Activated CD4-positive, alpha-beta T cell treated with anti-CD3 and anti-CD28 coated beads for 36 hours (primary cell): ENCODE measurements at regions of chr16 and their contacts with region 1.

Region 1: DNA sequence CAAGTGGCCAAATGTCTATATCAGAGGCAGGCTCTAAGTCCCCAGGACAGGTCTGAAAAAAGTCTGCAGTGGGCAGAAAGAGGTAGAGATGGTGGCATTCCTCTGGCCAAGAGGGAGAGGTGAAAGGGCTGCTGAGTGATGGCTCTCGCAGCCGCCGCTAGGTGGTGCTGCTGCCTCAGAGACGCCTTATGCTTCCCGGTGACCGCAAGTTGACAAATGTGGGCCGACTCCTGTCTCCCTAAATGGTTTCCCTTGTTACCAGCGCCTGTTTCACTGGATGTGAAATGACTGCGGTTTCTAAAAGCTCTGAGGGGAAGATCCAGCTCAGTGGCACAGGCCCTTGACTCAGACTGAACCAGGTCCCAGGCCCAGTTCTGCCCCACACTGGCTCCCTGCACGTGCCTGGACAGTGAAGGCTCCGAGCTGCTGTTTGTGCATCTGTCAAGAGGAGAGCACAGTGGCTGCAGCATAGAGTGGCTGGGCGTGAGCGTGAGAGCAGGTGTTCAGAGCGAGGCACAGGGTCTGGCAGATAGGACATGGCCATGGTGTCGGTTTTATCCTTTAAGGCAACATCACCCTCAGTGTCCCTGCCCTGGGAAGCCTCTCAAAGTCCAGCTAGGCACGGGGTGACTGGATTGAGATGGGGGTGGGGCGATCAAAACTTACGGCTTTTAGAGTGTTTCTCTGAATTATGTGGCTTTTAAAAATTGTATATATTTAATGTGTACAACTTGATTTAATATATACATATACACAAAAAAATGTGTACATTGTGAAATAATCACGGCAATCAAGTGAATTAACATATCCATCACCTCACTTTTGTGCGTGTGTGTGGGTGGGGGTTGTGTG is 19.9 kb downstream of the CLEC16A start:
- DNase-seq: peak; percentile 93
- ATAC-seq: peak; percentile 40
- H3K4me3 Mint-ChIP-seq: peak overlapping the region; percentile 59
- H3K27ac Mint-ChIP-seq: peak overlapping the region; percentile 98
- H3K4me1 Mint-ChIP-seq: peaks cover 74% of the 10 kb centered on the region
- H3K27me3 Mint-ChIP-seq: no peaks in the 10 kb centered on the region

Region 2: DNA sequence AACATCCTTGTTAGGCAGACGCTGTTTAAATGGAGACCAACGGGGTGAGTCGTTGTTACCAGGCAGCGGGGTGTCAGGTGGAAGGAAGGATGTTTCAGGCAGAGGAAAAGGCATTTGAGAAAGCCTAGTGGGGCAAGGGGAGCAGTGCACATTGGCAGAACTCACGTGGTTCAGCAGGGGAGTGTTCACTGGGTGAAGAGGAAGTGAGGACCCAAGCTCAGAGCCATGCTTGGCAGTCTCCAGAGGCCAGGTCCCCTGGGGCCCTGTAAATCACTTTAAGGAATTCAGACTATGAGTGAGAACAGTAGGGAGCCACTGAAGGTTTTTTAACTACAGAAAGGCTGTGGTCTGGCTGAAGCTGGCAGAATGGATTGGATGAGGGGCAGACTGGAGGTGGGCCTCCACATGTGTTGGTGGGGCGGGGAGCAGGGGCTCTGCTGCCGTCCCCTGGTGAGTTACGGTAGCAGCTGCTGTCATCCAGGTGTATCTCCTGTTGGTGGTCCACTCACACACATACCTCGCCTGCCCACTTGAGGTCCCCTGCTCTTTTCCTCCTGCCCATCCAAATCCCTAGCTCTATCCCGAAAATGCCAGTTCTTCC is 14.8 kb before region 1 on chr16:
- CTCF ChIA-PET with region 1: interaction called, 121 read pairs
- POLR2A ChIA-PET with region 1: interaction called, 3 read pairs
- intact Hi-C with region 1: no loop called
- DNase-seq: peak; percentile 69
- ATAC-seq: peak; percentile 81
- H3K4me3 Mint-ChIP-seq: no peak overlapping the region
- H3K27ac Mint-ChIP-seq: peak overlapping the region; percentile 70
- H3K4me1 Mint-ChIP-seq: peaks cover 63% of the 10 kb centered on the region
- H3K27me3 Mint-ChIP-seq: no peaks in the 10 kb centered on the region

Region 3: GRCh38 chr16:11051879-11052808 is 87.9 kb after region 1 on chr16:
- CTCF ChIA-PET with region 1: interaction called, 18 read pairs
- POLR2A ChIA-PET with region 1: interaction called, 10 read pairs
- intact Hi-C with region 1: loop called (anchors 1 to 2 kb)
- DNase-seq: peak; percentile 85
- ATAC-seq: peak; percentile 89
- H3K4me3 Mint-ChIP-seq: peak overlapping the region; percentile 7
- H3K27ac Mint-ChIP-seq: peak overlapping the region; percentile 75
- H3K4me1 Mint-ChIP-seq: peaks cover 61% of the 10 kb centered on the region
- H3K27me3 Mint-ChIP-seq: no peaks in the 10 kb centered on the region

Region 4: DNA sequence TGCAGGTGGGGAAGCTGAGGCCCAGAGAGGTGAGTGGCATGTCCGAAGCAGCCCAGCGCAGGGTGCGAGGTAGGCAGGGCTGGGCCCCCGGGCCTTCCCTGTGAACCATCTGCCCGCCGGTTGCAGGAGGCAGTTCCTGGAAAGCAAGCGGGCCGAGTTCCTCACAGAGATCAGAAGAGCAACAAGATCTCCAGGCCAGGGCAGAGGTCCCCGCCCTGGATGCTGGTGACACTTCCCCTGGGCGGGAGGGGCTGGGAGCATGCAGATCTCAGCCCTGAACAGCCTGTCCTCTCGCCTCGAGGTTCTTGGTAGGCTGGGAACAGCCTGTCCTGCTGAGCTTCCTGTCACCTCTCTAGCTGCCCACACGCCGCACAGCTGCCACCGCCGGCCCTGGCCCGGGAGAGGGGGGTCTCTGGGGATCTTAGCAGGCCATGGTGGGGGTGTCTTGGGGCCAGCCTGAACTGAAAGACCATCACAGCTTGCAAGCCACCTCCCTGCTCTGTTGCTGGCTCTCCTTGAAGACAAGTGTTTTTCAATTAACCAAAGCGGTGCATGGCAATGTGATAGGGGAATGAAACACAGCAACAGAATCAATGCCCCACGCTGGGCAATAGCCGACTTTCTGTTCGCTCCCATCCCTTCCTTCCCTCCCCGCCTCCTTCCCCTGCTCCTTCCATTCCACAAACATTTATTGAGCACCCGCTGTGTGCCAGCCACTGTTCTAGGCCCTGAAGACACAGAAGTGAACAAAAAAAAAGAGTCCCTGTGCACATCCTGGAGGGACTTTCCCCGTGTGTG is 260.0 kb after region 1 on chr16:
- CTCF ChIA-PET with region 1: interaction called, 13 read pairs
- POLR2A ChIA-PET with region 1: interaction called, 21 read pairs
- intact Hi-C with region 1: loop called in 1 of 2 experiments (anchors 1 kb)
- DNase-seq: peak; percentile 88
- ATAC-seq: peak; percentile 55
- H3K4me3 Mint-ChIP-seq: peak overlapping the region; percentile 54
- H3K27ac Mint-ChIP-seq: peak overlapping the region; percentile 98
- H3K4me1 Mint-ChIP-seq: peaks cover 61% of the 10 kb centered on the region
- H3K27me3 Mint-ChIP-seq: no peaks in the 10 kb centered on the region

Region 5: DNA sequence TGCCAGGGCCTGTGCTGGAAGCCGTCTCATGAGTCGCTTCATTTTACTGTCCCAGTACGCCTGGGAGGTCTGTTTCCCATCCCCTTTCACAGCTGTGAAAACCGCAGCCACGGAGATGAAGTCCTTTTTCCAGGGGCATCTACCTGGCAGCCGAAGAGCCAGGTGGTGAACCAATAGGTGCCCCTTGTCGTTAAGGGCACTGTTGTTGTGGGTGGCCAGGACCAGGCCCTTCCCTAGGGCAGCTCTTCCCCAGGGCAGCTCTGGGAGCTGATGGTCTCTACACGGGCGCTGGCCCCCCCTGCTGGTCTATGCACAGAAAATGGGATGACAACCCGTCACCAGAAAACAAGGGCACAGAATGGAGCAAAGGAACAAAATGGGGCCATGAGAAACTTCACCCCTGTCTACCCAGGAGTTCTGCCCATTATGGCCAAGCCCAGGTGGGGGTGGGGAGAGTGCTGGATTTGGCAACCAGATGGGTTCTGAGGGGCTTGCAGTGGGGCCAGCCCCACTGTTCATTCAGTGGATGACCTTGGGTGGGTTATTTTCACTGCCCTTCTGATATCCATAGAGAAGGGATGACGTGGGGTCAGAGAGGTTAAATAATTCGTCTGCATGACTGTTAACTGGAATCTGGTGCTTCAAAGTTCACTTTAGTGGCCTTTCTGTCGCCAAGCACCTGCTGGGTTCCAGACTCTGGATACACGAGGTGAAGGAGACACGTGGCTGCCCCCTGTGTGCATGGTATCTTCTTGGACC is 392.5 kb after region 1 on chr16:
- CTCF ChIA-PET with region 1: interaction called, 18 read pairs
- POLR2A ChIA-PET with region 1: interaction called, 3 read pairs
- intact Hi-C with region 1: loop called (anchors 1 to 2 kb)
- DNase-seq: peak; percentile 79
- ATAC-seq: no peak
- H3K4me3 Mint-ChIP-seq: peak overlapping the region; percentile 46
- H3K27ac Mint-ChIP-seq: peak overlapping the region; percentile 23
- H3K4me1 Mint-ChIP-seq: peaks cover 67% of the 10 kb centered on the region
- H3K27me3 Mint-ChIP-seq: peaks cover 7% of the 10 kb centered on the region

Region 6: GRCh38 chr16:11497851-11498289 is 533.6 kb after region 1 on chr16:
- CTCF ChIA-PET with region 1: interaction called, 4 read pairs
- POLR2A ChIA-PET with region 1: no interaction called
- intact Hi-C with region 1: loop called (anchors 10 kb)
- DNase-seq: no peak
- ATAC-seq: no peak
- H3K4me3 Mint-ChIP-seq: no peak overlapping the region
- H3K27ac Mint-ChIP-seq: peak overlapping the region; percentile 60
- H3K4me1 Mint-ChIP-seq: peaks cover 38% of the 10 kb centered on the region
- H3K27me3 Mint-ChIP-seq: no peaks in the 10 kb centered on the region

Region 7: DNA sequence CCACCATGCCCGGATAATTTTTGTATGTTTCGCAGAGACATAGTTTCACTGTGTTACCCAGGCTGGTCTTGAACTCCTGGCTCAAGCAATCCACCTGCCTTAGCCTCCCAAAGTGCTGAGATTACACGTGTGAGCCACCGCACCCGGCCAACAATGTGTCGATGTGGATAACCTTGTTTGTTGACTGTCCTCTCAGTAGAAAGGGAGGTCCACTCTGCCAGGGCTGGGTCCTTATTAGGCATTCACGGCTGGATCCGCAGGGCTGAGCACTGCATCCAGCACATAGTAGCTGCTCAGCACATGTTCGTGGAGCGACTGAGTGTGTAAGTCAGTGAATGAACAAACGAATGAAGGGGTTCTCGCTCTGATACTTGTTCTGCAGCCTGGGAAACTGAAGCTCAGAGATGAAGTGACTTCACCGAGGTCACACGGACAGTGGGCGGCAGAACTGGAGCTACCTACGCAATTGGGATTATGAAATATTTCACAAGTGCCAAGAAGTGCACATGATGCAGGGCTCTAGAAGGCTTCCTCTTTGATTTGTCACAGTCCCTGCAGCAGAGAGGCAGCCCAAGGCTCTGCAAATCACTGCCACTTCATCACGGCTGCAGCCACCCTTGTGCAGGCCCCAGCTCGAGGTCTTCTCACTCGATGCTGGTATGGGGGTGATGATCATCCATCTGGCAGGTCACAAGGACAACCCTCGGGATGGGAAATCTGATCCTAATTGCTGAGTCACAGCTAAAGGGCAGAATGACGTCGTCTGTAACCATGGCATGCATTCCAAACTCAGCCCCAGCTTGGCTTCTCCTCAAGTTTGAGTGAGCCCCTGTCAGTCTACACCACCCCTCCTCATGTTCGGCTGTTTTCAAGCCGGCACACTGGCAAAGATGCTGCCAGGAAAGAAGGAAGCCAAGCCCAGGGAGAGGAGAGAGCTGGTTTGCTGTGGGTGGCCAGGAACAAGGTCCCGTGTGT is 675.9 kb after region 1 on chr16:
- CTCF ChIA-PET with region 1: no interaction called
- POLR2A ChIA-PET with region 1: no interaction called
- intact Hi-C with region 1: loop called (anchors 10 kb)
- DNase-seq: no peak
- ATAC-seq: no peak
- H3K4me3 Mint-ChIP-seq: no peak overlapping the region
- H3K27ac Mint-ChIP-seq: no peak overlapping the region
- H3K4me1 Mint-ChIP-seq: peaks cover 8% of the 10 kb centered on the region
- H3K27me3 Mint-ChIP-seq: no peaks in the 10 kb centered on the region